Transverse colon (tissue), 4 donors: ENCODE measurements at regions of chr14 and their contacts with region 1.

Region 1: DNA sequence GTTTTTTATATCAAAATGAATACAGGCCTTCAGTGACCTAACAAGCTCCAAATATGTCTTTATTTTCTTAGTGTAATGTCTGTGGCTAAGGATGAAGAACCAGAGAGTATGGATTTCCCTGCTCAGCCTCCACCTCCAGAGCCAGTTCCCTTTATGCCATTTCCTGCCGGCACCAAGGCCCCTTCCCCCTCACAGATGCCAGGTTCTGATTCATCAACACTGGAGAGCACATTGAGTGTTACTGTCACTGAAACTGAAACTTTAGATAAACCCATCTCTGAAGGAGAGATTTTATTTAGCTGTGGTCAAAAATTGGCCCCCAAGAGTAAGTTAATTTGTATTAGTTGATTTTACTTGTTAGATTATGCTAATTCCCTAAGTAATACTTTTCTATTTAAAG is 61.0 kb downstream of the KIAA0586 start:
- DNase-seq: no peak
- H3K4me3 ChIP-seq: no peak overlapping the region
- H3K27ac ChIP-seq: no peak overlapping the region
- H3K4me1 ChIP-seq: peaks cover 0 to 8% (median 0%) of the 10 kb centered on the region in 4 donors
- H3K27me3 ChIP-seq: no peaks in the 10 kb centered on the region
- CTCF ChIP-seq: no peak
- EP300 ChIP-seq: no peak
- POLR2A ChIP-seq: no peak

Region 2: DNA sequence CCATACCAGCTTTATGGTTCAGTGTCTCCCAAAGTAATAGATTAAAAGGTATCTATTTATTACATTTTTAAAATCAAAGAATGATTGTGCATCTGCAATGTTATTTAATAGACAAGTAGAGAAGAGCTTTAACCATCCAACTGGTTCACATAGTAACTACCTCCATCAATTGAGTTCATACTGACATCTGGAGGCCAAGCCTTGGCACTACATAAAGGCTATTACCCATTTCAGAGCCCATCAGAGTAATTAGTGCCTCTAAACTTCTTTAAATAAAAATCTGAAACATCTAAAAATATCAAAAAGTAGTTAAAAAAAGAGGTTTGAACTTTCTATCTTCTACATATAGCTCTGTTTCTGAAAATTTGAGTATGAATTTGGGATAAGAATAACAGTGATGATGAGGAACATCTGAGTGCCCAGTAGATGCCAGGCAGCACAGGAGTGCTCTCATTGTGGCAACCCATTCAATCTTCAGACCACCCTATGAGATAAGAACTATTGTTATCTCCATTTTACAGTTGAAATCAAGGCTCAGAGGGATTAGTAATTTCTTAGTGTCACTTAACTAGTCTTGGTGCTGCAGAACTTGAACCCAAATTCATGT is 567.0 kb after region 1 on chr14:
- in situ Hi-C with region 1: loop called in 1 of 4 experiments (anchors 25 kb)
- intact Hi-C with region 1: no loop called
- DNase-seq: peak; percentile 17
- H3K4me3 ChIP-seq: no peak overlapping the region
- H3K27ac ChIP-seq: no peak overlapping the region
- H3K4me1 ChIP-seq: no peaks in the 10 kb centered on the region
- H3K27me3 ChIP-seq: no peaks in the 10 kb centered on the region
- CTCF ChIP-seq: peak; percentile 63 to 75 (median 67)
- EP300 ChIP-seq: no peak
- POLR2A ChIP-seq: no peak

Region 3: DNA sequence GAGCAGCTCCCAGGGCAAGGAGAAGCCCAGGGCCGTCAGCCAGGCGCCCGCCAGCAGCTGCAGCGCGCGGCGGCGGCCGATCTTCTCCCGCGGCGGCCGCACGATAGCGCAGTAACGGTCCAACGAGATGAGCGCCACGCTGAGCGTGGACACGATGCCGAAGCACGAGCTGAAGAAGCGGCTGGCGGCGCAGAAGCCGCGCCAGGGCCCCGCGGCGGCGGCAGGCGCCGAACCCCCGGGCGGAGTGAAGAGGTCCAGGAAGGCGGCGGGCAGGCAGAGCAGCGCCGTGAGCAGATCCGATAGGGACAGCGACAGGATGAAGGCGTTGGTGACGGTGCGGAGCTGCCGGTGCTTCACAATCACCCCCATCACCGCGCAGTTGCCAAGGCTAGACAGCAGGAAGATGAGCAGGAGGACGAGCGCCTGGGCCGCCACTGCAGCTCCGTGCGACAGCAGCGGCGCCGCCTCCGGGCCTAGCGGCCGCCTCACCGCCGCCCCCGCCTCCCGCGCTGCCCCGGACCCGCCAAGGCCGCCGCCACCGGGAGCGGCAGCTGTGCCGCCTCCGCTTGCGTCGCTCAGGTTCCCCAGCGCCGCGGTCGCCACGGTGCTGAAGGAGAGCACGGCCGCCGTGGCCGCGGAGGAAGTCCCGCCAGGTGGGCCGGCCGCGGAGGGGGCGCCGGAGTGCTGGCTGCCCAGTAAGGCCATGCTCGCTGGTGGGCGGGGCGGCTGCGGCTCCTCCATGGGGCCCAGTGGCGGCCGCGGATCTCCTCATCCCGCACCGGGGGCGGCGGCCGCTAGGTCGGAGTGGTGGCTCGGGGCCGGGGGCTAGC is 976.2 kb after region 1 on chr14:
- in situ Hi-C with region 1: loop called in 1 of 4 experiments (anchors 25 kb)
- intact Hi-C with region 1: no loop called
- DNase-seq: peak; percentile 72
- H3K4me3 ChIP-seq: peak overlapping the region; percentile 48 to 66 (median 59)
- H3K27ac ChIP-seq: peak overlapping the region; percentile 66 to 85 (median 82)
- H3K4me1 ChIP-seq: peaks cover 4 to 16% (median 12%) of the 10 kb centered on the region in 4 donors
- H3K27me3 ChIP-seq: peaks cover 7% of the 10 kb centered on the region
- CTCF ChIP-seq: no peak
- EP300 ChIP-seq: no peak
- POLR2A ChIP-seq: no peak